Dendritic cell treated with granulocyte-macrophage colony-stimulating factor and Interleukin-4, amounts not matched to agents 40 ng/mL and 50 ng/mL, for 4 days (primary cell): ENCODE measurements at regions of chr2 and their contacts with region 1.

Region 1: DNA sequence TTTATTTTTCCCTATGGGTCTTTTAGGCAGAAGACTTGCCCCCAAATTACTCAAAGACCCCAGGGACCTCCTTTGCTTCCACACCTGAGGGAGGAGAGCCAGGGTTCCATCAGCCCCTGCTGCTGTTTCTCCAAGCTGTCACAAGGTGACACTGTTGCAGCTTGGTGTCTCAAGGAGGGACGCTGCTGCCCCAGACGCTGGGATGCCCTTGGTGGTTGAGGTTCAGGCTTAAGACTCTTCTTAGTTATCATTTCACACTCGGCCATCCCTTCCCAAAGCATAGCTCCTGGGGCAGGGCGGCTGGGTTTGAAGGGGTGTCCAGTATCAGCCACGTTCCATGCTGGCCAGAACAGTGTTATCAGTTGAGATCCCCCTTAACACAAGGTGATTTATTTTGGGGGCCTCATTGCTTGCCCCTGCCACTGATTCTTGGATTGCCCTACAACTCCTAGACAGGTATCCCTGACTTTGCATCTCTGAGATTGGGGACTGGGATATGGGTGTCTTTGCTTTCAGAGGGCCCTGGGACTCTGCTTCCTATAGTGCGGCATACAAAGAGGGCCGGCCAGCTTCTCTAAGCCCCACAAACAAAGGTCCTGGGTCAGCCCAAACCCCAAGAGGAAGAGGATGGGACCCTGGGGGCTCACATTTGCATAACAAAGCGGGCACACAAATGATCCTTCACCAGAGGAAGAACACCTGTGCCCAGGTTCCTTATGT is 22.7 kb downstream of the GPR55 start:
- H3K4me3 Mint-ChIP-seq: no peak overlapping the region
- H3K27ac Mint-ChIP-seq: no peak overlapping the region
- H3K4me1 Mint-ChIP-seq: peaks cover 16% of the 10 kb centered on the region
- H3K27me3 Mint-ChIP-seq: peaks cover 13% of the 10 kb centered on the region

Region 2: GRCh38 chr2:230400454-230400853 is 501.9 kb before region 1 on chr2:
- intact Hi-C with region 1: no loop called
- H3K4me3 Mint-ChIP-seq: no peak overlapping the region
- H3K27ac Mint-ChIP-seq: no peak overlapping the region
- H3K4me1 Mint-ChIP-seq: peaks cover 7% of the 10 kb centered on the region
- H3K27me3 Mint-ChIP-seq: no peaks in the 10 kb centered on the region

Region 3: GRCh38 chr2:230700447-230700846 is 201.9 kb before region 1 on chr2:
- intact Hi-C with region 1: no loop called
- H3K4me3 Mint-ChIP-seq: no peak overlapping the region
- H3K27ac Mint-ChIP-seq: peak overlapping the region; percentile 71
- H3K4me1 Mint-ChIP-seq: peaks cover 11% of the 10 kb centered on the region
- H3K27me3 Mint-ChIP-seq: no peaks in the 10 kb centered on the region

Region 4: GRCh38 chr2:231056453-231057424 is 154.4 kb after region 1 on chr2 and contains the start of gene PSMD1:
- intact Hi-C with region 1: loop called (anchors 10 kb)
- H3K4me3 Mint-ChIP-seq: peak within 1 kb of the TSS; percentile 94
- H3K27ac Mint-ChIP-seq: peak within 1 kb of the TSS; percentile 97
- H3K4me1 Mint-ChIP-seq: peaks cover 45% of the 10 kb centered on the region
- H3K27me3 Mint-ChIP-seq: peaks cover 24% of the 10 kb centered on the region